MCF 10A (cell line): ENCODE measurements at regions of chr18 and their contacts with region 1.

Region 1: DNA sequence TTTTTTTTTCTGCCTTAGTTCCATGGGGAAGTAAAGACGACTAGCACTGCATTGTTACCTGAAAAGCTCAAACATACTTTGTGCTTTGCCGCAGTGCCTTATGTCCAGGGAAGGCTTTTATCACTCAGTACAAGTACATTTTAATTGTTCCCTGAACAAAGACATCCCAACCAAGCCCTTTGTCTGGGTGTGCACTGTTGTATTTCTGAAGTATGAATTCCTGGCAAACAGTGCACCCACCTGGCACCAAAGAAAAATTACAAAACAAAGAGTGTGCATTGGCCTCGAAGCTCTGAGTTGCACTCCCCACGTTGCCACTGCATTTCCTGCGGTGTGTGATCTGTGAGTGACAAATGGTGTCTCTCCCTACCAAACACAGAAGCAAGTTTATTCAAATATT is 858.5 kb upstream of the PIK3C3 start:
- DNase-seq: peak; percentile 60
- H3K4me3 Mint-ChIP-seq: no peak overlapping the region
- H3K27ac Mint-ChIP-seq: no peak overlapping the region
- H3K4me1 Mint-ChIP-seq: peaks cover 14% of the 10 kb centered on the region
- H3K27me3 Mint-ChIP-seq: no peaks in the 10 kb centered on the region
- CTCF ChIP-seq: peak; percentile 60

Region 2: GRCh38 chr18:40159141-40160017 is 937.1 kb before region 1 on chr18:
- CTCF ChIA-PET with region 1: no interaction called
- POLR2A ChIA-PET with region 1: no interaction called
- intact Hi-C with region 1: loop called (anchors 2 kb)
- DNase-seq: peak; percentile 62
- H3K4me3 Mint-ChIP-seq: no peak overlapping the region
- H3K27ac Mint-ChIP-seq: no peak overlapping the region
- H3K4me1 Mint-ChIP-seq: peaks cover 13% of the 10 kb centered on the region
- H3K27me3 Mint-ChIP-seq: no peaks in the 10 kb centered on the region
- CTCF ChIP-seq: peak; percentile 55

Region 3: GRCh38 chr18:40413160-40413559 is 683.3 kb before region 1 on chr18:
- CTCF ChIA-PET with region 1: no interaction called
- POLR2A ChIA-PET with region 1: no interaction called
- intact Hi-C with region 1: loop called (anchors 5 kb)
- DNase-seq: peak; percentile 52
- H3K4me3 Mint-ChIP-seq: no peak overlapping the region
- H3K27ac Mint-ChIP-seq: no peak overlapping the region
- H3K4me1 Mint-ChIP-seq: peaks cover 12% of the 10 kb centered on the region
- H3K27me3 Mint-ChIP-seq: no peaks in the 10 kb centered on the region
- CTCF ChIP-seq: peak; percentile 53

Region 4: DNA sequence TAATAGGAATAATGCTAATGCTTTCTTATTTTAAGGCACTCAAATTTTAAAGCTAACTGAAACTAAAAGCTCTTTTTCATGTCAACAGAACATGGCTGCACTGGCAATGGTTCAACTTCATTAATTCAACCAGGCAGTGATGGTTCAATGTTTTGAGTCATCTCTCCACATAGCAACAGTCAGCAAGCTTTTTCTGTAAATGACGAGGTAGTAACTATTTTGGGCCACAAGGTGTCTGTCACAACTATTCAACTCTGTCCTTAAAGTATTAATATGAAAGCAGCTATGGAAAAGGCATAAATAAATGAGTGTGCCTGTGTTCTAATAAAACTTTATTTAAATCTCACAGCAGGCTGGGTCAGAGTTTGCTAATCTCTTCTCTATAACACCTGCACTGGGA is 567.0 kb before region 1 on chr18:
- CTCF ChIA-PET with region 1: no interaction called
- POLR2A ChIA-PET with region 1: no interaction called
- intact Hi-C with region 1: loop called (anchors 5 kb)
- DNase-seq: peak; percentile 47
- H3K4me3 Mint-ChIP-seq: no peak overlapping the region
- H3K27ac Mint-ChIP-seq: no peak overlapping the region
- H3K4me1 Mint-ChIP-seq: peaks cover 25% of the 10 kb centered on the region
- H3K27me3 Mint-ChIP-seq: no peaks in the 10 kb centered on the region
- CTCF ChIP-seq: peak; percentile 27

Region 5: GRCh38 chr18:40868110-40868858 is 228.2 kb before region 1 on chr18:
- CTCF ChIA-PET with region 1: no interaction called
- POLR2A ChIA-PET with region 1: no interaction called
- intact Hi-C with region 1: loop called (anchors 5 kb)
- DNase-seq: peak; percentile 95
- H3K4me3 Mint-ChIP-seq: peak overlapping the region; percentile 52
- H3K27ac Mint-ChIP-seq: peak overlapping the region; percentile 96
- H3K4me1 Mint-ChIP-seq: peaks cover 28% of the 10 kb centered on the region
- H3K27me3 Mint-ChIP-seq: no peaks in the 10 kb centered on the region
- CTCF ChIP-seq: no peak

Region 6: DNA sequence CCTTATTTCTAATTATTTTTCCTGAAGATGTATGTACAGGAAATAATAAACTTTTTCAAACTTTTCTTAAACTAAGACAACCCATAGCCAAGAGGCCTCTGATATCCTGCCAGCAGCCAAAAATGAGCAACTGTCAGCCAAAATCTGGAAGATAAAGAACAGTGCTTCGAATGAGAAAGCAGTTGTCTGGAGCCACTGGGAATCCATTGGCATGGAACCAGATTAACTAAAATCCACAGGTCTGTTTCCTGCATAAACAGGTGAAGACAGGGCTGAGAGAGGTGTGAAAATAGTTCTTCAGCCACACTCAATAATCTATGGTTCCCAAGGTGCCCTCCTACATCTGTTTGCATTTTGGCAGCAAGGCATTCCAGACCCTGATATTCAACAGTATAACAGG is 218.1 kb before region 1 on chr18:
- CTCF ChIA-PET with region 1: no interaction called
- POLR2A ChIA-PET with region 1: no interaction called
- intact Hi-C with region 1: no loop called
- DNase-seq: no peak
- H3K4me3 Mint-ChIP-seq: no peak overlapping the region
- H3K27ac Mint-ChIP-seq: peak overlapping the region; percentile 97
- H3K4me1 Mint-ChIP-seq: peaks cover 17% of the 10 kb centered on the region
- H3K27me3 Mint-ChIP-seq: no peaks in the 10 kb centered on the region
- CTCF ChIP-seq: no peak

Region 7: GRCh38 chr18:41075212-41075611 is 21.3 kb before region 1 on chr18:
- CTCF ChIA-PET with region 1: no interaction called
- POLR2A ChIA-PET with region 1: no interaction called
- intact Hi-C with region 1: no loop called
- DNase-seq: peak; percentile 28
- H3K4me3 Mint-ChIP-seq: no peak overlapping the region
- H3K27ac Mint-ChIP-seq: peak overlapping the region; percentile 66
- H3K4me1 Mint-ChIP-seq: peaks cover 22% of the 10 kb centered on the region
- H3K27me3 Mint-ChIP-seq: no peaks in the 10 kb centered on the region
- CTCF ChIP-seq: no peak

Region 8: GRCh38 chr18:41906528-41907146 is 810.1 kb after region 1 on chr18:
- CTCF ChIA-PET with region 1: interaction called, 3 read pairs
- POLR2A ChIA-PET with region 1: no interaction called
- intact Hi-C with region 1: loop called (anchors 10 kb)
- DNase-seq: peak; percentile 49
- H3K4me3 Mint-ChIP-seq: peak overlapping the region; percentile 52
- H3K27ac Mint-ChIP-seq: no peak overlapping the region
- H3K4me1 Mint-ChIP-seq: no peaks in the 10 kb centered on the region
- H3K27me3 Mint-ChIP-seq: no peaks in the 10 kb centered on the region
- CTCF ChIP-seq: peak; percentile 73